PC-9 (cell line): ENCODE measurements at regions of chr12 and their contacts with region 1.

Region 1: DNA sequence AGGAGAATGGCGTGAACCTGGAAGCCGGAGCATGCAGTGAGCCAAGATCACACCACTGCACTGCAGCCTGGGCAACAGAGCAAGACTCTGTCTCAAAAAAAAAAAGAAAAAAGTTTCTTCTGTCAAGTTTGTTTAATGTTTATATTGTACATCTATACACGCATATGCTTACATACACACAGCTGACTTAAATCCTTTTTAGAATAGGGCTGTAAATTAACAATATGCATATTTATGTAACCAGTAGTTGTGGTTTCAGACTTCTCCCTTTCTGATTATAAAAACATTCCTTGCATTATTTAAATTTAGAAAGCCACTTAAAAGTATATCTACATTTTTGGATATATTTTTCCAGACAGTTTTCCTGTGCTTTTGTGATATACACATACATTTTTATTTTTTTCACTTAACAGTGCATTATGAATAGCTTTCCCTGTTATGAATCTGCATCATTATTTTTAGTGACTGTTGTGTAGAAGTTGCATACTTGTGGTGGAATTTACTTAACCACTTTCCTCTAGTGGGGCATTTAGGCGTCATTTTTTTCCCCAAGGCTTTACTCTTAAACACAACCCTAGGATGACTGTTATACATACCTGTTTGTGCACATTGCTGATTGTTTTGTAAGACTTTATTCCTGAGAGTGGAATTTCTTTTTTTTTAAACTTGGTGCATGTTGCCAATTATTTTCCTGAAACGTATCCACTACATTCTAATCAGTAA is 29.4 kb downstream of the POLR3B start:
- DNase-seq: peak in 1 of 2 experiments; percentile 57
- H3K4me3 ChIP-seq: no peak overlapping the region
- H3K27ac ChIP-seq: no peak overlapping the region
- H3K4me1 ChIP-seq: no peaks in the 10 kb centered on the region
- H3K27me3 ChIP-seq: no peaks in the 10 kb centered on the region
- CTCF ChIP-seq: no peak

Region 2: DNA sequence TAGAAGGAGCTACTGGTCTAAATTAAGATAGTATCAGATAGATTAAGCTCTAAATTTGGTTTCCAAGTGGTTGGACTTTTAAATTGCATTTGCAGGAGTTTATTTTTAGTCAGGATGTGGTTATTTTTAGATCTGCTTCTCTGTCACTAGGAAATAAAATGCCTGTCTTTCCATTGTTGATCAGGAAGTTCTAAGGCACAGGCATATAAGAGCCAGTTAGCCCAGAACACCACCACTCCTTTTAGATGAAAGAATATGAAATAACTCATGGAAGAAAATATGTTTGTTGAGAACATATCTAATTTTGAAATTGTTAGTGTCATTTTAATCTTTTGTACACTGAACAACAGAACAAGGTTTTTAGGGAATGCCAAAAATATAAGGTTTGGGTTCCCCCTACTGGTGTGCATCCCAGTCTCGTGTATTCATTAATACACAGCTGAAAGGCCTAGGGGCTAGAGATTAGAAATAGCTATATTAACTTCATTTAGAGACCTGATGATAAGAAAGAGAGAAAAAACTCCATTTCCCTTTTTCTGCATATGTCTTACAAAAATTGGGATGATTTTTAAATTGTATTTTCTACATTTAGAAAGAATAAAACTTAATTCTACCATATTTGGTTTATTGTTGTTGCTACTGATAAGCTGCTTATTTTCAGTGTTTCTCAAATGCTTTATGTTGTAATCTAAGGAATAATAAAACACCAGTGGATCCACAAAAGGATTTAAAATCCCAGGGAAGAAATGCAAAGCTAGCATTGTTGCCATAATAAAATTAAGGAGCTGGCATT is 454.7 kb after region 1 on chr12:
- CTCF ChIA-PET with region 1: interaction called, 3 read pairs
- POLR2A ChIA-PET with region 1: no interaction called
- intact Hi-C with region 1: loop called (anchors 1 kb)
- DNase-seq: peak in 1 of 2 experiments; percentile 14
- H3K4me3 ChIP-seq: no peak overlapping the region
- H3K27ac ChIP-seq: no peak overlapping the region
- H3K4me1 ChIP-seq: peaks cover 16% of the 10 kb centered on the region
- H3K27me3 ChIP-seq: no peaks in the 10 kb centered on the region
- CTCF ChIP-seq: peak; percentile 78

Region 3: DNA sequence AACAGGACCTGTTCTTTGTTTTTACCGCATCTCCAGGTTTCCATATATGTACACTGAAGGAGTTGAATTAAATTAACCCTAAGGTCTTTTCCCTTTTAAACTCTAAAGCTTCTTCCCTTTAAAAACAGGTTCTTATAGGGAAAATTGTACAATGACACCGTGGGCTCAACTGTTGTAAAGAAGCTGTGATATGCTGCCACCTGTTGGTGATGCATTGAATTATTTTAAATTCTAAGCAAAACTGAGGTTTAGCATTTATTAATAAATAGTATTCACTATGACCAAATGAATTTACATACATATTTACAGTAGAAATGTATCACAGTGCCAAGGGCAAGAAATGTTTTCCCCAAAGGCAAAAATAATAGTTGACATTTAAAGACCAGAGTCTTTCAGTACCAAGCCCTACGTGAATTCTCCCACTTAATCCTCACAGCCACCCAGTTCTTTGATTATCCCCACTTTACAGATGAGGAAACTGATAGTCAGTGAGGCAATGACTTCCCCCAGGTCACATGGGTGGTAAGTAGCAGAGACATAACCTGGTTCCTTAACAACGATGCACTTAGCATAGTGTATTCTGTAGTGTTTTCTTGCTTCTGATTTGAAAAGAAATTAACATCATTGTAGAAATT is 533.1 kb after region 1 on chr12:
- CTCF ChIA-PET with region 1: no interaction called
- POLR2A ChIA-PET with region 1: no interaction called
- intact Hi-C with region 1: loop called (anchors 1 kb)
- DNase-seq: peak in 1 of 2 experiments; percentile 49
- H3K4me3 ChIP-seq: no peak overlapping the region
- H3K27ac ChIP-seq: no peak overlapping the region
- H3K4me1 ChIP-seq: no peaks in the 10 kb centered on the region
- H3K27me3 ChIP-seq: no peaks in the 10 kb centered on the region
- CTCF ChIP-seq: peak; percentile 90